Activated naive CD4-positive, alpha-beta T cell treated with anti-CD3 and anti-CD28 coated beads for 36 hours (primary cell): ENCODE measurements at regions of chr14 and their contacts with region 1.

Region 1: DNA sequence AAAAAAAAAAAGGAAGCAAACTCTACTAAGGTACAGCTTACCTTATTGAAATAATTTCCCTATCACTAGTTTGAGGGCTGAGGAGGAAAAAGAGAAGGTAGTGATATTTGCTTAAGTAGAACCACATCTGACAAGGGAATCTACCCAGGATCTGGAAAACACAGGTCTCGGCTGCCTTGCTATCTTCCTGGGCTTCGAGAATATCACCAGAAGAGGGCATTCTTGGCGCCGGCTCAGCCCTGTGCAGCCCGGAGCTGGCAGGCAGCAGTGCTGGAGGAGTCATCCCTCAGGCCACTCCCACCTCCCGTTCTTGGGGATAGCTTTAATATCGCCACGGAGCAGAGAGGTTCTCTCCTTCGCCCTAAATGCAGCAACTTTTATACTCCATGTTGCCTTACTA is 1181.2 kb downstream of the VRK1 start:
- DNase-seq: peak; percentile 96
- H3K4me3 Mint-ChIP-seq: peak overlapping the region; percentile 82
- H3K27ac Mint-ChIP-seq: peak overlapping the region; percentile 96
- H3K4me1 Mint-ChIP-seq: peaks cover 56% of the 10 kb centered on the region
- H3K27me3 Mint-ChIP-seq: no peaks in the 10 kb centered on the region

Region 2: DNA sequence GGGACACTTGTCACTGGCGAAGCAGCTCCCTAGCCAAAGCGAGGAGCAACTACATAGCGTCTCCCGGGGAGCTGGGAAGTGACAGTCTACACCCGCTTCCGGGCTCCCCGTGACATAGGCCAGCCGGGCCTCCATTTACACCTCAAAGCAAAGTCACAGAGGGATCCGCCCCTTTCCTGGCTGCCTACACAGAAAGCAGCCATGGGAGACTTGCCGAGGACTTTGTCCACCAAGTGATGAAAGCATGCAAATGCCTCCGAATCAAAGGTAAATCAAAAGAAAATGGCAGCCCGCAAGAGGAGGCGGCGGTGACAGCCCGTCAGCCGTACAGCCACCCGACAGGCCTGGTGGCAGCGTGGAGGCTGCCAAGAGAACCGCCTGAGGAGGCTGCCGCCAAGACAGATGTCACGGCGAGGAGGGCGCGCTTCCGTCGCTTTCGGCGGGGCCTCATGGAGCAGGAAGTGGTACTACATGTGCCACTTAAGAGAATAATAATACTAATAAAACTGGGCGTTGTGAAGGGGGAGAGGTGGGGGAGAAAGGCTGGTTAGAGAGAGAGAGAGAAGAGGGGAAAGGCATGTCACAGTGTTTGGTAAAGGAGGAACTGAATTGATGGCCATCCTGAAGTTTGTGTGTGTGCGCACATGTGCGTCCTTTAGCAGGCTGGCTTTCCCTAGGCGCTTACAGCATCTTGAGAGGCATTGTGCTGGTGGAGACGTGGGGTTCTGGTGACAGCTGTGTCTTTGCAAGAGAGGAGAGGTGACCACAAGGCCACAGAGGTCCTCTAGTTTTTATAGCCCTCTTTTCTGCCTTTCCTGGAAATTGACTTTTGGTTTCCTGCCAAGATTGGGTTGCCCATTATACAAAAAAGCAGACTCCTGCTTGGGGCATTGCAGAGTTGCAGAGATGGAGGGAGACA is 519.4 kb before region 1 on chr14:
- CTCF ChIA-PET with region 1: no interaction called
- intact Hi-C with region 1: loop called (anchors 5 kb)
- DNase-seq: peak; percentile 91
- H3K4me3 Mint-ChIP-seq: peak overlapping the region; percentile 96
- H3K27ac Mint-ChIP-seq: peak overlapping the region; percentile 100
- H3K4me1 Mint-ChIP-seq: peaks cover 32% of the 10 kb centered on the region
- H3K27me3 Mint-ChIP-seq: no peaks in the 10 kb centered on the region

Region 3: GRCh38 chr14:97724265-97724731 is 254.0 kb before region 1 on chr14:
- CTCF ChIA-PET with region 1: interaction called, 4 read pairs
- intact Hi-C with region 1: loop called (anchors 1 kb)
- DNase-seq: peak; percentile 64
- H3K4me3 Mint-ChIP-seq: peak overlapping the region; percentile 76
- H3K27ac Mint-ChIP-seq: peak overlapping the region; percentile 96
- H3K4me1 Mint-ChIP-seq: peaks cover 69% of the 10 kb centered on the region
- H3K27me3 Mint-ChIP-seq: no peaks in the 10 kb centered on the region

Region 4: GRCh38 chr14:97771340-97772045 is 206.8 kb before region 1 on chr14:
- CTCF ChIA-PET with region 1: no interaction called
- intact Hi-C with region 1: no loop called
- DNase-seq: no peak
- H3K4me3 Mint-ChIP-seq: no peak overlapping the region
- H3K27ac Mint-ChIP-seq: no peak overlapping the region
- H3K4me1 Mint-ChIP-seq: no peaks in the 10 kb centered on the region
- H3K27me3 Mint-ChIP-seq: no peaks in the 10 kb centered on the region

Region 5: DNA sequence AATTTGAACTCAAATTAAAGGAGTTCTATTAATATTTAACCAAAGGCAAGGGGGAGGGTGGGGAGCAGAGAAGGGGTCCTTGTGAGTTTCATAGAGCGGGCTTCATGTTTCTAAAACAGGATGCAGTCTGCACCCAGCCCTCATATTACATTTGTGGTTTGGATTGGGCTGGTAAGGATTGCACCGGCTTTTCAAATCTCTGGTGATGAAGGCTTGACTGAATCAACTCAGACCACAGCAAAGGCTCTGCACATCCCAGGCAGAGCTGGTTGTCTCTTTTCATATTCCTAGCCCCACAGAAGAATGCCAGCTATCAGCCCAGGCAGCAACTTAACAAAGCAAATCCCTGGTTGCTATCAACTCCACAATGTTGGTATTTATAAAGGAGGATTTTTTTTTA is 40.3 kb after region 1 on chr14:
- CTCF ChIA-PET with region 1: interaction called, 13 read pairs
- intact Hi-C with region 1: loop called (anchors 2 kb)
- DNase-seq: peak; percentile 75
- H3K4me3 Mint-ChIP-seq: no peak overlapping the region
- H3K27ac Mint-ChIP-seq: peak overlapping the region; percentile 2
- H3K4me1 Mint-ChIP-seq: peaks cover 87% of the 10 kb centered on the region
- H3K27me3 Mint-ChIP-seq: no peaks in the 10 kb centered on the region

Region 6: GRCh38 chr14:98173305-98173704 is 195.0 kb after region 1 on chr14:
- CTCF ChIA-PET with region 1: interaction called, 5 read pairs
- intact Hi-C with region 1: loop called (anchors 1 kb)
- DNase-seq: peak; percentile 78
- H3K4me3 Mint-ChIP-seq: peak overlapping the region; percentile 49
- H3K27ac Mint-ChIP-seq: peak overlapping the region; percentile 98
- H3K4me1 Mint-ChIP-seq: peaks cover 97% of the 10 kb centered on the region
- H3K27me3 Mint-ChIP-seq: no peaks in the 10 kb centered on the region

Region 7: DNA sequence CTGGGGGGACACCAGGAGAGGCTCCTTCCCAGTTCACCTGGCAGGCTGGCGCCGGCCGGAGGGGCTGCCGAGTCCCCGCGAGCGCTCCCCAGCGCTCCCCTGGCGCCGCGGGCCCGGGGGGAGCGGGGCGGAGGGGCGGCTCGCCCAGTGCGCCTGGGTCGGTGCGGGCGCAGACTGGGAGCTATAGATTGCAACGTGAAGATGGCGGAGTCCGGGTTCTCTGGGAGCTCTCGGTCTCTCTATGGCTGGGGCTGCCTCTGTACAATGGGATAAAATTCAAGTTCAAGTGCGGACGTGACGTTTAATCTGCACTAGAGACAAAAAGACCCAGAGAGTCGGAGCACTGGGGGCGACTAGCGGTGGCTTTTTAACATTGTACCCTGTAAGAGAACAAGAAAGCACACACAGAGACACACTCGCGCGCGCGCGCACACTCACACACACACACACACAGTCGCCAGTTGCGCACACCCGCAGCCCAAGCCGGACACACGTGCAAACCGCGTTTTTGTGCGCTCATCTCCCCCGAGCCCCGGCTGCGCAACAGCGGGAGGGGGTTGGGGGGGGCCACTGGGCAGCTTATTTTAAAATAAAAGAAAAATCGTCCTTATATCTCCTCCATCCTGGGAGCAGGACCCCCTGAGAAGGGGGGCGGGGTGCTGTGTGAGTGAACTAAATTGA is 1293.8 kb after region 1 on chr14 and contains the start of gene BCL11B:
- CTCF ChIA-PET with region 1: no interaction called
- intact Hi-C with region 1: loop called (anchors 1 kb)
- DNase-seq: peak; percentile 95
- H3K4me3 Mint-ChIP-seq: peak within 1 kb of the TSS; percentile 96
- H3K27ac Mint-ChIP-seq: peak within 1 kb of the TSS; percentile 97
- H3K4me1 Mint-ChIP-seq: peaks cover 23% of the 10 kb centered on the region
- H3K27me3 Mint-ChIP-seq: no peaks in the 10 kb centered on the region
- total RNA-seq, gene BCL11B: 71.7 to 71.9 TPM